MCF 10A (cell line): ENCODE measurements at regions of chr15 and their contacts with region 1.

Region 1: GRCh38 chr15:44215594-44215993 is 20.5 kb upstream of the FRMD5 start:
- DNase-seq: peak; percentile 72
- H3K4me3 Mint-ChIP-seq: no peak overlapping the region
- H3K27ac Mint-ChIP-seq: no peak overlapping the region
- H3K4me1 Mint-ChIP-seq: peaks cover 11% of the 10 kb centered on the region
- H3K27me3 Mint-ChIP-seq: no peaks in the 10 kb centered on the region
- CTCF ChIP-seq: no peak

Region 2: DNA sequence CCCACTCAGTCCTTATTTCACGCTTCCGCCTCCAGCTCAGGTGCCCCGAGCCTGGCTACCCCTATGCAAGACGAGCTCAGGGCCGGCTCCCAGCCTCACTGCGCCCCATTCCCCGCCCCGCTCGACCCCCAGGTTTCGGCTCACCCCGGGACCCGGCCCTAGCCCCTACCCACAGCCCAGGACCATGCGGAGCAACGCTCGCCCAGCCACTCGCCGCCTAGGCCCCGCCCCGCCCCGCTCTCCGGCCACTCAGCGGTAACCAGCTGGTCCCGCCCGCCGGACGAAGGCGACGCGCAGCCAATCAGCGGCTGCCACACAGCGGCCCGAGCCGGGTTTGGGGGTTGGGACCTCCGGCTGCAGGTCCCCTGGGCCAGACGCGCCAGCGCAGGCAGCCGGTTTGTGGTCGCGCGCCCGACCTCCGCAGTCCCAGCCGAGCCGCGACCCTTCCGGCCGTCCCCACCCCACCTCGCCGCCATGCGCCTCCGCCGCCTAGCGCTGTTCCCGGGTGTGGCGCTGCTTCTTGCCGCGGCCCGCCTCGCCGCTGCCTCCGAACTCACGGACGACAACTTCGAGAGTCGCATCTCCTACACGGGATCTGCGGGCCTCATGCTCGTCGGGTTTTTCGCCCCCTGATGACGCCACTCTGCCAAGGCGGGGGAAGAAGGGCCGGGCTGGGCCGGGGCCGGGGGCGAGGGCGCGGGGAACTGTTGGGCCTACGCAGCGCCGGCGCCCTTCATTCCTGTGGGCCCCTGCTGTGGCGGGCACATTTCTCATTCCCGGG is 566.8 kb before region 1 on chr15 and contains the start of gene CATSPER2:
- CTCF ChIA-PET with region 1: no interaction called
- POLR2A ChIA-PET with region 1: no interaction called
- intact Hi-C with region 1: no loop called
- DNase-seq: no peak
- H3K4me3 Mint-ChIP-seq: no peak within 1 kb of the TSS
- H3K27ac Mint-ChIP-seq: no peak within 1 kb of the TSS
- H3K4me1 Mint-ChIP-seq: no peaks in the 10 kb centered on the region
- H3K27me3 Mint-ChIP-seq: no peaks in the 10 kb centered on the region
- CTCF ChIP-seq: no peak
- total RNA-seq, gene CATSPER2: 7.0 and 7.5 TPM in 2 replicates

Region 3: DNA sequence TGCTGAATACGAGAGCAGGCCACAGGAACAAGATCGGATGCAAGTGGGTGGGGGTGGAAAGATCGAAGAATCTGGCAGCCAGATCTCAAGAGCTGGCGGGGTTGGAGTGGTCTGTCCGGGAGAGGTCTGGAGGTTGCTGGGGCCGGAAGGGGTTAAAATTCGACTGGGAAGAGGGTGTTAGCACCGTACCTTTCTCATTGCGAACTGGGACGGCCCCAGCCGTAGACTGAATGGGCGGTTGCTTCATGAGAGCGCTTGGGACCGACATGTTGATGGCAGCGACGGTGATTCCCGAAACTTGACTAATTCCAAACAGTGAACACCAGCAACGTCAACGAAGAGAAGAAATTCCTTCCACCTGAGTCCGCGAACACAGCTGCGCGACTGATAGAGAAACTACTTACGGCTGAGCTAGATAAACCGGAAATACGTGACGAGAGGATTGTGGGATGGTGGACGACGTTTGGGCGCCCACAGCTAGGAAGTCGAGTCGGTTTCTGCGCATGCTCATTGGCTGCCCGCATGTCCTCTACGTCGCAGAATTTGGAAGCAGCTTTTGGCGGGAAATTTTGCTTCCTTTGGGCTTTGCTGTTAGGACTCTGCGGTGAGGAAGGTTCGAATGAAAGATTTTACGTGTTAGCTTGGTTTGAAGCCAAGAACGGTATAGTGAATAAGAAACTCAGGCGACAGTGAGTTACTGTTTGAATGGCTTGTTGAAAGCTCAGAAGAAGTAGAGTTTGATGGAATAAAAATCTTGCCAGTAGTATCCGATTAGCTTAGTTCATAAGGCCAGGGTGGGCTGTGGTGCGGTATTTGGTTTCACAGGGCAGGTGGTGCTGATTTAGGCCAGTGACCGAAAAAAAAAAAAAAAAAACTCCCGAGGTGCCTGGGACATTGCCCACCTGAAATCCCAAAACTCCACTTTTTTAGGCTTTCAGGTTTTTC is 391.0 kb before region 1 on chr15 and contains the start of gene MFAP1:
- CTCF ChIA-PET with region 1: no interaction called
- POLR2A ChIA-PET with region 1: no interaction called
- intact Hi-C with region 1: no loop called
- DNase-seq: peak; percentile 95
- H3K4me3 Mint-ChIP-seq: peak within 1 kb of the TSS; percentile 100
- H3K27ac Mint-ChIP-seq: peak within 1 kb of the TSS; percentile 99
- H3K4me1 Mint-ChIP-seq: peaks cover 20% of the 10 kb centered on the region
- H3K27me3 Mint-ChIP-seq: no peaks in the 10 kb centered on the region
- CTCF ChIP-seq: no peak
- total RNA-seq, gene MFAP1: 23.0 and 26.5 TPM in 2 replicates

Region 4: GRCh38 chr15:43872416-43873020 is 343.1 kb before region 1 on chr15:
- CTCF ChIA-PET with region 1: no interaction called
- POLR2A ChIA-PET with region 1: no interaction called
- intact Hi-C with region 1: loop called (anchors 1 kb)
- DNase-seq: peak; percentile 61
- H3K4me3 Mint-ChIP-seq: no peak overlapping the region
- H3K27ac Mint-ChIP-seq: no peak overlapping the region
- H3K4me1 Mint-ChIP-seq: no peaks in the 10 kb centered on the region
- H3K27me3 Mint-ChIP-seq: no peaks in the 10 kb centered on the region
- CTCF ChIP-seq: peak; percentile 41

Region 5: GRCh38 chr15:43939070-43939469 is 276.5 kb before region 1 on chr15:
- CTCF ChIA-PET with region 1: interaction called, 4 read pairs
- POLR2A ChIA-PET with region 1: no interaction called
- intact Hi-C with region 1: loop called (anchors 1 kb)
- DNase-seq: peak; percentile 47
- H3K4me3 Mint-ChIP-seq: no peak overlapping the region
- H3K27ac Mint-ChIP-seq: no peak overlapping the region
- H3K4me1 Mint-ChIP-seq: no peaks in the 10 kb centered on the region
- H3K27me3 Mint-ChIP-seq: no peaks in the 10 kb centered on the region
- CTCF ChIP-seq: peak; percentile 68

Region 6: DNA sequence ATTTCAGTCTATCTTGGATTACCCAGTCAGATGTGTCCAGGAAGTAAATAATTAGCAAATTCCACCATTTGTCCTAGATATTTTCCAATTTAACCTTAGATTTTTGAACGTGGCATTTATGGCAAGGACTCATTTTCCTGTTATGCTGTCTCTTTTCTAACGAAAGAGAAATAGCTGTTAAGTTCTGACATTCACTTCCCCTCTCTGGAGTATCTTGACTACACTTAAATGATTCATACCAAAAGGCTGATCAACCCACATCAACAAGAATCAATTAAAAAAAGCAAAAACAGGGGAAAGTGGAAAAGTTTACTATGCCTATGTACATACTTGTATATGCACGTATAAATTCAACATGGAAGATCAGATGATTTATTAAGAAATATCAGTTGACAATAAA is 170.4 kb before region 1 on chr15:
- CTCF ChIA-PET with region 1: no interaction called
- POLR2A ChIA-PET with region 1: no interaction called
- intact Hi-C with region 1: no loop called
- DNase-seq: no peak
- H3K4me3 Mint-ChIP-seq: no peak overlapping the region
- H3K27ac Mint-ChIP-seq: no peak overlapping the region
- H3K4me1 Mint-ChIP-seq: no peaks in the 10 kb centered on the region
- H3K27me3 Mint-ChIP-seq: no peaks in the 10 kb centered on the region
- CTCF ChIP-seq: no peak

Region 7: DNA sequence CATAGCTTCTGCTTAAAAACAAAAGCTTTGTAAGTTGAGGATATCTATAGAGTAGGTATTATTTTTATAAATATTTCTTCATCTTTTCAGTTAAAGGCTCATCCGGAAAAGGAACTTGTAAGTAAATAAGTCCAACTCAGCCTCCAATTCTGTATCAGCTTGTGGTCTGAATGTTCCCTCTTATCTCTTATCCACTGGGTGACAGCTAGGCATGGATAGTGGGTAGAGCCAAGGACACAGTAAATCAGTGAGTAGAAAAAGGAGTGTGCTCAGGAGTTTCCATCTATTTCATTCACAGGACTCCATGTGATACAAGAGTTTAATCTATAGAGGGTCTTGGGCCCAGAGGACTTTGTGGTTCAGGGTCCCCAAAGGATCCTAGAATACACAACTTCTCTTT is 71.4 kb before region 1 on chr15:
- CTCF ChIA-PET with region 1: interaction called, 3 read pairs
- POLR2A ChIA-PET with region 1: no interaction called
- intact Hi-C with region 1: loop called (anchors 10 kb)
- DNase-seq: no peak
- H3K4me3 Mint-ChIP-seq: no peak overlapping the region
- H3K27ac Mint-ChIP-seq: no peak overlapping the region
- H3K4me1 Mint-ChIP-seq: no peaks in the 10 kb centered on the region
- H3K27me3 Mint-ChIP-seq: no peaks in the 10 kb centered on the region
- CTCF ChIP-seq: no peak

Region 8: GRCh38 chr15:44243829-44244228 is 28.2 kb after region 1 on chr15:
- CTCF ChIA-PET with region 1: no interaction called
- POLR2A ChIA-PET with region 1: no interaction called
- intact Hi-C with region 1: no loop called
- DNase-seq: no peak
- H3K4me3 Mint-ChIP-seq: no peak overlapping the region
- H3K27ac Mint-ChIP-seq: no peak overlapping the region
- H3K4me1 Mint-ChIP-seq: no peaks in the 10 kb centered on the region
- H3K27me3 Mint-ChIP-seq: no peaks in the 10 kb centered on the region
- CTCF ChIP-seq: no peak

Region 9: DNA sequence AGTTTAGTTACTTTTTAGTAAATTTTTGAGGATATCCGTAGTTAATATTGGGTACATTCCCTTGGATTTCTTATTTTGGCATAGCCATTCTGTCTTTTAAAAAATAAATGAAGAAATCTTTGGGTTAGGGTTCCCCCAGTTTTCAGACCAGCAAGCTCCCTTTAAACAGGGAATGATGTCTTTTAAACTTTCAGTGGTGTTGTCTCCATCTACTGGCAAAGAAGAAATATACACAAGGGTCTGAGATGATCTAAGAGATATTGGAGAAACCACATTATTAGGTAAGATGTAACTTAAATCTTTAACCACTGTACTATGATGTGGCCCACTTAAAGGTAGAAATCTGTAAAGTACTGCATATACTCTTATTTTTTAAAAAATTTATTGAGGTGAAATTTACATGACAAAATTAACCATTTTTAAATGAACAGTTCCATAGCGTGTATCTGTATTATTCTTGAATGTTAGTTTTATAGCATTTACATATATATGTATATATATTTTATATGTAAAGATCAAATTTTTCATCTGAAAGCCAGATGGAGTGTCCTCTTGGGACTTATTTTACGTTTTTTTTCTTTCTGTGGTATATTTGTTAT is 286.3 kb after region 1 on chr15:
- CTCF ChIA-PET with region 1: interaction called, 3 read pairs
- POLR2A ChIA-PET with region 1: no interaction called
- intact Hi-C with region 1: loop called (anchors 1 kb)
- DNase-seq: peak; percentile 49
- H3K4me3 Mint-ChIP-seq: no peak overlapping the region
- H3K27ac Mint-ChIP-seq: no peak overlapping the region
- H3K4me1 Mint-ChIP-seq: no peaks in the 10 kb centered on the region
- H3K27me3 Mint-ChIP-seq: no peaks in the 10 kb centered on the region
- CTCF ChIP-seq: peak; percentile 58